PC-9 (cell line): ENCODE measurements at regions of chr4 and their contacts with region 1.

Region 1: GRCh38 chr4:86720508-86721068 is 126.5 kb downstream of the PTPN13 start:
- DNase-seq: no peak
- H3K4me3 ChIP-seq: no peak overlapping the region
- H3K27ac ChIP-seq: no peak overlapping the region
- H3K4me1 ChIP-seq: no peaks in the 10 kb centered on the region
- H3K27me3 ChIP-seq: no peaks in the 10 kb centered on the region
- CTCF ChIP-seq: no peak

Region 2: DNA sequence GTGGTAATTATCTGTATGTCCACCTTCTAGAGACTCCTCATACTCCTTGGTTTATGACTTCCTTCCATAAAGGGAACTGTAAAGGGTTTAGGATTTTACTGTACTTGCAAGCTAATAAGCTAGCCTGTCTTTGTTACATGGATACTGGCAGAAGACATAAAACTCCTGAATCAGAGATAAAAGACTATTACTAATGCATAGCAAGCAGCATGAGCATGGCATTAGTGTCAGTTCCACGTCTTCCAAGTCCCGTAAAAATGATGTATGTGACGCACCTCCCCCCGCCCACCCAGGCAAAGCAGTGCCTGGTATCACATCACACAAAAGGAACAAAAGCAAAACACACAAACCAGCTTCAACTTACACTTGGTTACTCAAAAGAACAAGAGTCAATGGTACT is 57.6 kb after region 1 on chr4:
- CTCF ChIA-PET with region 1: no interaction called
- POLR2A ChIA-PET with region 1: interaction called, 11 read pairs
- intact Hi-C with region 1: no loop called
- DNase-seq: no peak
- H3K4me3 ChIP-seq: no peak overlapping the region
- H3K27ac ChIP-seq: no peak overlapping the region
- H3K4me1 ChIP-seq: no peaks in the 10 kb centered on the region
- H3K27me3 ChIP-seq: no peaks in the 10 kb centered on the region
- CTCF ChIP-seq: no peak

Region 3: DNA sequence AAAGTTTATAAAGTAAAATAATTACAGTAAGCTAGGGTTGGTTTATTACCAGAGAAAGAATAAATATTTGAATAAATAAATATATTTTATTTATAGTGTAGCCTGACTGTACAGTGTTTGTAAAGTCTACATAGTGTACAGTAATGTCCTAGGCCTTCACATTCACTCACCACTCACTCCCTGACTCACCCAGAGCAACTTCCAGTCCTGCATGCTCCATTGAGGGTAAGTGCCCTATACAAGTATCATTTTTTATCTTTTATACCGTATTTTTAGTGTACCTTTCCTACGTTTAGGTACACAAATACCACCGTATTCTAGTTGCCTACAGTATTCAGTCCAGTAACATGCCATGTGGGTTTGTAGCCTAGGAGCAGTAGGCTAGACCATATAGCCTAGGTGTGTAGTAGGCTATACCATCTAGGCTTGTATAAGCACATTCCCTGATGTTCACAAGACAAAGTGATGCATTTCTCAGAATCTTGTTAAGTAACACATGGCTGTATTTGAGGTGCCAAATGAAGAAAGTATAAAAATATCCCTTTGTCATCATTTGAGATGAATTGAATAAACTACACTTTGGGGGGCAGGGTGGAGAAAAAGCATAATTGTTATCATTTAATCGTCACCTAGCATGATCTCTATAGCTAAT is 514.6 kb after region 1 on chr4:
- CTCF ChIA-PET with region 1: no interaction called
- POLR2A ChIA-PET with region 1: no interaction called
- intact Hi-C with region 1: no loop called
- DNase-seq: no peak
- H3K4me3 ChIP-seq: peak overlapping the region; percentile 75; the same call in 1 of the 2 replicates
- H3K27ac ChIP-seq: no peak overlapping the region
- H3K4me1 ChIP-seq: peaks cover 5% of the 10 kb centered on the region
- H3K27me3 ChIP-seq: no peaks in the 10 kb centered on the region
- CTCF ChIP-seq: no peak